A549 (cell line): ENCODE measurements at regions of chr2 and their contacts with region 1.

Region 1: DNA sequence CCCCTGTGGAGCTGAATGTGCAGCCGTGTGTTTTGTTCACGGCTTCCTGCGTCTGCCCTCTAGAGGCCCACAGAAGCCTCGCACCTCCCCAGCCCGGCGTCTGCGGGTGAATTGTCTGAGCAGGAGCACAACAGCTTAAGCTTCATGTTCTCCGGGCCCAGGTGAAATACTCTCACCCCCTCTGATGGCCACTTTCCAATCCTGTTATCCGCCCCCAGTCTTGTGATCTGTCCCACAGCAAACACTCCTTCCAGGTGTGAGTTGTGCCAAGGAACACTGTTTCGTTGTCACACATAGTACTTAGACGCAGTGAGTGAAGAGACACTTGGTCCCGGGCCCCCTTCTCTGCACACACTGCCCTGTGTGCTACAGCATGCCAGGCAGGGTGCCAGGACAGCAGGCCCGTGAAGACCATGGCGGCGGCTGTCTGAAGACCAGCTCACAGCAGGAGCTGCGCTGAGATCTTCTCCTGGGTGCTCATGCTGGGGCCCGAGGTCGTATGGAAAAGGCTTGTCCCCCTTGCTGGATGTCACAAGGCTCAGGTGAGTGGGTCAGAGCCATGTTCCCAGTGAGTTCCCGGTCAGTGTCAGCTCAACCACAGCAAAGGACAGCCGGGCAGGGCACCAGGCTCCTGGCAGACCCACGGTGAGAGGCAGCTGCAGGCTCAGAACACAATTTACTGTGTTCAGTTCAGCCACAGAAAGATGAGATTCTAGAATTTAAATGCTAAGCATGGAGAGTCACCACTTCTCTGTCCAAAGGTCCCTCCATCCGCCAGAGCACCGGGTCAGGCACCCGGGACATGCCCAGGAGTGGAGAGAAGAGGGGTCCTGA is 6.8 kb upstream of the PXDN start:
- DNase-seq: peak; percentile 72 to 74
- ATAC-seq: peak; percentile 88 to 95
- H3K4me3 ChIP-seq: no peak overlapping the region
- H3K27ac ChIP-seq: no peak overlapping the region
- H3K4me1 ChIP-seq: no peaks in the 10 kb centered on the region
- CTCF ChIP-seq: peak; percentile 53
- EP300 ChIP-seq: no peak
- POLR2A ChIP-seq: no peak
- RAD21 ChIP-seq: peak; percentile 71

Region 2: DNA sequence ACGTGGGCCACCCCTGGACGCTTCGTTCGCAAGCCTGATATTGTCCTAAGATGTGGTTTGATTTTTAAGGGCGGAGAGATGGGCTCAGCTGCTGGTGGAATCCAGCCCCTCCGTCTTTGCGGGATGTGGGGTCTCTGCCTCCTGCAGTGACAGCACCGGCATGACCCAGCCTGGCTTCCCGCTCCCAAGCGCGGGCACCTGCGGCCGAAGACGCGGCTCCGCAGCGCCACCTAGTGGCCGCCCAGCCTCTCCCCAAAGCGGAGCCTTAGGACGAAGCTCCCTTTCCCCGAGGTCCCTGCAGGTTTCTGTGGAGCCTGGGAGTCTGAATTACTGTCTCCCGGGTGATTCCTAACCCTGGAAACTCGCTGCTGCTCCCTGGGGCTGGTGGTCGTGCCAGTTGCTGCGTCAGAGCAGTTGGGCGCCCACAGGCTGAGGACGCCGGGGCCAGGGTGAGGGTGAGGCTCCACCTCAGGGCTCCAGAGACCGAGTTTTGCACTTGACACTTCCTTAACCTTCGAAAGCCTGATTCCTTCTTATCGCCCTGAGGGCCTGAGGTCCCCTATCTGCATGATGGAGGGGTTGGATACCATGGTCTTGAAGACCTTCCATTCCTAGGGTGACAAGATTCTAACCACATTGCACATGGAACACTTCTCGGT is 200.4 kb before region 1 on chr2:
- CTCF ChIA-PET with region 1: interaction called, 11 read pairs
- POLR2A ChIA-PET with region 1: no interaction called
- DNase-seq: peak; percentile 46 to 75
- ATAC-seq: peak; percentile 71 to 93
- H3K4me3 ChIP-seq: no peak overlapping the region
- H3K27ac ChIP-seq: no peak overlapping the region
- H3K4me1 ChIP-seq: no peaks in the 10 kb centered on the region
- CTCF ChIP-seq: peak; percentile 88
- EP300 ChIP-seq: no peak
- POLR2A ChIP-seq: no peak
- RAD21 ChIP-seq: peak; percentile 62 to 67

Region 3: GRCh38 chr2:1591978-1592907 is 158.9 kb before region 1 on chr2:
- CTCF ChIA-PET with region 1: interaction called, 18 read pairs
- POLR2A ChIA-PET with region 1: no interaction called
- DNase-seq: peak; percentile 36 to 56
- ATAC-seq: peak; percentile 4 to 76; a peak in 3 of 6 replicates
- H3K4me3 ChIP-seq: no peak overlapping the region
- H3K27ac ChIP-seq: no peak overlapping the region
- H3K4me1 ChIP-seq: no peaks in the 10 kb centered on the region
- CTCF ChIP-seq: 0 out of 3 replicates have a peak, but pooled peaks have one; percentile 10
- EP300 ChIP-seq: no peak
- POLR2A ChIP-seq: no peak
- RAD21 ChIP-seq: peak; percentile 48 to 61; a peak in 4 of 5 replicates

Region 4: GRCh38 chr2:1675633-1676032 is 75.5 kb before region 1 on chr2:
- CTCF ChIA-PET with region 1: interaction called, 16 read pairs
- POLR2A ChIA-PET with region 1: no interaction called
- DNase-seq: peak; percentile 80 to 83
- ATAC-seq: peak; percentile 96 to 99
- H3K4me3 ChIP-seq: no peak overlapping the region
- H3K27ac ChIP-seq: peak overlapping the region; percentile 63 to 80
- H3K4me1 ChIP-seq: peaks cover 17% of the 10 kb centered on the region
- CTCF ChIP-seq: peak; percentile 38; the same call in 2 of the 3 replicates
- EP300 ChIP-seq: no peak
- POLR2A ChIP-seq: no peak
- RAD21 ChIP-seq: peak; percentile 24 to 42; a peak in 2 of 5 replicates

Region 5: GRCh38 chr2:1769703-1770422 is 18.7 kb after region 1 on chr2:
- CTCF ChIA-PET with region 1: interaction called, 17 read pairs
- POLR2A ChIA-PET with region 1: no interaction called
- DNase-seq: peak; percentile 74 to 87
- ATAC-seq: peak; percentile 72 to 95; a peak in 5 of 6 replicates
- H3K4me3 ChIP-seq: no peak overlapping the region
- H3K27ac ChIP-seq: no peak overlapping the region
- H3K4me1 ChIP-seq: no peaks in the 10 kb centered on the region
- CTCF ChIP-seq: peak; percentile 81
- EP300 ChIP-seq: no peak
- POLR2A ChIP-seq: no peak
- RAD21 ChIP-seq: peak; percentile 76 to 89